Caco-2 (cell line): ENCODE measurements at regions of chrX and their contacts with region 1.

Region 1: GRCh38 chrX:125132285-125132684 is 187.4 kb upstream of the TEX13C start:
- DNase-seq: no peak
- H3K4me3 ChIP-seq: no peak overlapping the region
- H3K4me3 Mint-ChIP-seq: no peak overlapping the region
- H3K27ac Mint-ChIP-seq: no peak overlapping the region
- H3K4me1 ChIP-seq: no peaks in the 10 kb centered on the region
- H3K4me1 Mint-ChIP-seq: no peaks in the 10 kb centered on the region
- H3K27me3 ChIP-seq: no peaks in the 10 kb centered on the region
- H3K27me3 Mint-ChIP-seq: no peaks in the 10 kb centered on the region
- CTCF ChIP-seq: peak; percentile 3 to 17

Region 2: GRCh38 chrX:124388562-124388961 is 743.7 kb before region 1 on chrX:
- CTCF ChIA-PET with region 1: no interaction called
- POLR2A ChIA-PET with region 1: no interaction called
- intact Hi-C with region 1: loop called (anchors 5 kb)
- DNase-seq: peak; percentile 33 to 48
- H3K4me3 ChIP-seq: no peak overlapping the region
- H3K4me3 Mint-ChIP-seq: no peak overlapping the region
- H3K27ac Mint-ChIP-seq: no peak overlapping the region
- H3K4me1 ChIP-seq: no peaks in the 10 kb centered on the region
- H3K4me1 Mint-ChIP-seq: no peaks in the 10 kb centered on the region
- H3K27me3 ChIP-seq: no peaks in the 10 kb centered on the region
- H3K27me3 Mint-ChIP-seq: no peaks in the 10 kb centered on the region
- CTCF ChIP-seq: peak; percentile 47 to 57

Region 3: GRCh38 chrX:124406294-124407014 is 725.8 kb before region 1 on chrX:
- CTCF ChIA-PET with region 1: interaction called, 4 read pairs
- POLR2A ChIA-PET with region 1: no interaction called
- intact Hi-C with region 1: loop called (anchors 1 kb)
- DNase-seq: peak; percentile 45 to 56
- H3K4me3 ChIP-seq: no peak overlapping the region
- H3K4me3 Mint-ChIP-seq: no peak overlapping the region
- H3K27ac Mint-ChIP-seq: no peak overlapping the region
- H3K4me1 ChIP-seq: no peaks in the 10 kb centered on the region
- H3K4me1 Mint-ChIP-seq: no peaks in the 10 kb centered on the region
- H3K27me3 ChIP-seq: no peaks in the 10 kb centered on the region
- H3K27me3 Mint-ChIP-seq: peaks cover 4% of the 10 kb centered on the region
- CTCF ChIP-seq: peak; percentile 44 to 52

Region 4: GRCh38 chrX:124954402-124954801 is 177.9 kb before region 1 on chrX:
- CTCF ChIA-PET with region 1: no interaction called
- POLR2A ChIA-PET with region 1: no interaction called
- intact Hi-C with region 1: loop called (anchors 5 kb)
- DNase-seq: no peak
- H3K4me3 ChIP-seq: no peak overlapping the region
- H3K4me3 Mint-ChIP-seq: no peak overlapping the region
- H3K27ac Mint-ChIP-seq: no peak overlapping the region
- H3K4me1 ChIP-seq: no peaks in the 10 kb centered on the region
- H3K4me1 Mint-ChIP-seq: no peaks in the 10 kb centered on the region
- H3K27me3 ChIP-seq: no peaks in the 10 kb centered on the region
- H3K27me3 Mint-ChIP-seq: no peaks in the 10 kb centered on the region
- CTCF ChIP-seq: no peak

Region 5: DNA sequence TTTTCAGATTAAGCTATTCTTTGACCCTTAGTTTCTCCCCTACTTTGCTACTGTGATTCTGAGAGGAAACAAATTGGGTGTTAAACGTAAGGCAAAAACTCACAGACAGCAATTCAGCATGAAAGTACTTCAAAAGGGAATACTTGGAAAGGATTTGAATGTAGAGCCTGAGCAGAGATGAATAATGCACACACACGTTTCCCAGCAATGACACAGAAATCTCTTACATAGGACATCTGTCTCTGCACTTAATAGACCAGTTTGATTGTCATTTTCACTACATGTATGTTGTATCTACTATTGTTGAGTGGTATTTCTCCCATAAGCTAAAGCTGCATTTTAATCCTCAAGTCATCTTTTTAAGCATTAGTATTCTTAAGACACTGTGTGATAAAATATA is 21.3 kb after region 1 on chrX:
- CTCF ChIA-PET with region 1: no interaction called
- POLR2A ChIA-PET with region 1: no interaction called
- intact Hi-C with region 1: no loop called
- DNase-seq: no peak
- H3K4me3 ChIP-seq: no peak overlapping the region
- H3K4me3 Mint-ChIP-seq: no peak overlapping the region
- H3K27ac Mint-ChIP-seq: no peak overlapping the region
- H3K4me1 ChIP-seq: no peaks in the 10 kb centered on the region
- H3K4me1 Mint-ChIP-seq: no peaks in the 10 kb centered on the region
- H3K27me3 ChIP-seq: no peaks in the 10 kb centered on the region
- H3K27me3 Mint-ChIP-seq: peaks cover 2% of the 10 kb centered on the region
- CTCF ChIP-seq: no peak